Dorsolateral prefrontal cortex (tissue), 120 donors: ENCODE measurements at regions of chr9 and their contacts with region 1.

Region 1: GRCh38 chr9:128628471-128629048 is 28.1 kb downstream of the DYNC2I2 start:
- DNase-seq: peak in 2 of 10 donors; percentile 49 to 70
- H3K4me3 ChIP-seq: no peak overlapping the region
- H3K27ac ChIP-seq: peak overlapping the region in 41 of 59 donors; percentile 6 to 80 (median 59)
- H3K27me3 ChIP-seq: no peaks in the 10 kb centered on the region
- CTCF ChIP-seq: no peak

Region 2: GRCh38 chr9:128593039-128593438 is 35.5 kb before region 1 on chr9:
- intact Hi-C with region 1: loop called in 1 of 2 experiments (anchors 5 kb)
- DNase-seq: no peak
- H3K4me3 ChIP-seq: no peak overlapping the region
- H3K27ac ChIP-seq: peak overlapping the region in 2 of 59 donors; percentile 17 to 52
- H3K27me3 ChIP-seq: no peaks in the 10 kb centered on the region
- CTCF ChIP-seq: no peak